AG04449 (cell line): ENCODE measurements at regions of chr13 and their contacts with region 1.

Region 1: DNA sequence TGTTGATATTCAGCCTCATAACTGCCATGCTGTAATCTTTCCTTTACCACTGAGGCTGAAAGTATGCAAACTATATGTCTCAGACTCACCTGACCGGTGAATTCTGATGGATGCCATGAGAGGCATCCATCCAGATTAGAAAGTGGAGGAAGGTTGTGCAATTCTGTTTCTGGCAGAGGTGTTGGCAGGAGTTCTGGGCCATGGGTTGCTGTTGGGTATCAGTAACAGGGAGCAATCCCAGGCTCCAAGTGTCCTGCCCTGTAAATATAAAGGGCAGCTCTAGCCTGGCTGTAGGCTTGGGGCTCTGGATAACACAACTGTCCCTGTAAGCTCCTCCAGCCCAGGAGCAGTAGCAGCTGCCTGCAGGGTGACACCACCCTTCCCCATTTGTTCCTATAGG is 77.4 kb upstream of the ABCC4 start:
- DNase-seq: no peak
- H3K4me3 ChIP-seq: no peak overlapping the region
- CTCF ChIP-seq: no peak

Region 2: GRCh38 chr13:95181586-95181985 is 197.0 kb before region 1 on chr13:
- CTCF ChIA-PET with region 1: interaction called, 1,369 read pairs
- POLR2A ChIA-PET with region 1: no interaction called
- DNase-seq: no peak
- H3K4me3 ChIP-seq: no peak overlapping the region
- CTCF ChIP-seq: no peak

Region 3: DNA sequence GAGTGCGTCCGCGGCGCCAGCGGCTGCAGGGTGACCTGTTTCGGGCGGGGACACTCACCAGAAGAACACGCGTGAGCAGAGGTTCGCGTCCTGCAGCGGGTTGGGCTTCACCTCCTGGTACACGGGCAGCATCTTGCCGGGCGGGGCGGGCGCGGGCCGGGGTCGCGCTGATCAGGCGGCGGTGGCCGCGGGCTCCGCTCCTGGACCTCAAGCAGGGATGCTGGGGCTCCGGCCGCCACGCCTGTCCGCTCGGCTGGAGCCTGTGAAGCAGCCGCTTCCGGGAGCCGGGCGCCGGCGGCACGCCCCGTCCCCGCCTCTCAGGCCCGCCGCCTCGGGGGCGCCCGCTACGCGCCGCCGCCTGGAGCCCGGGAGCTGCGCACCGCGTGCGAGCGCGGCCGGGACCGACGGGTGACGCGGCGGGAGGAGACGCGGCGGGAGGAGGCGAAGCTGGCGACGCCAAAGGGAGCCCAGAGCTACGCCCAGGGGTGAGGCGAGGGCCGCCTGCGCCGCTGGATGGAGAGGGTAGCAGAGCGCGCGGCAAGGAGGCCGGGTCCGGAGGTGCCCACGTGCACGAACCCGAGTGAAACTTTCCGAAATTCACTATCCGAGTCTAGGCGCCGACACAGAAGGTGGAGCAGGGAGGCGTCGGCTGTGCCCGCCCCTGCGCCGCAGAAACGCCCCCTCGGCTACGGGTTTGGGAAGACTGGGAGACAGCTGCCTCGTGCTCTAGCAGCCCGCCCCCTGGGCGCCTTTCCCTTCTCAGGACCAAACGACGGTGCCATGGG is 77.2 kb before region 1 on chr13 and contains the start of gene ABCC4:
- CTCF ChIA-PET with region 1: interaction called, 14 read pairs
- POLR2A ChIA-PET with region 1: no interaction called
- DNase-seq: no peak
- H3K4me3 ChIP-seq: peak within 1 kb of the TSS; percentile 81
- CTCF ChIP-seq: peak; percentile 6

Region 4: DNA sequence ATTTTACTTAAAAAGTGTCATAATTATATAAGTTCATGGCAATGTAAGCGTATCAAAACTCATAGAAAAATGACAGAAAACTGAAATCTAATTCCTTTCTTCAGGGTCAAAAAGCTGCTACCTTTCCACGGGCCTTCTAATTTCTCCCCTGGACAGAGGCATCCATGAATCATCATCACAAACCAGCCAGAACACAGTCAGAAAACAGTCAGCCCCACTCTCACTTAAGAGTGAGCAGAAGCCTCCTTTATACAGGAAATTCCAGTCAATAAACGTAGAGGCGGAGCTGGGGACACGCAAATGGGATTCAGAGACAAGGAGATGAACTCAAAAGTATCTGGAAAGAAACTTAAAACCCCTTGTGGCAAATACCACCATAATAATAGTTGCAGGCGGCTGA is 23.1 kb before region 1 on chr13:
- CTCF ChIA-PET with region 1: interaction called, 18 read pairs
- POLR2A ChIA-PET with region 1: no interaction called
- DNase-seq: peak; percentile 24
- H3K4me3 ChIP-seq: no peak overlapping the region
- CTCF ChIP-seq: no peak

Region 5: GRCh38 chr13:95367309-95367843 is 11.2 kb before region 1 on chr13:
- CTCF ChIA-PET with region 1: interaction called, 13 read pairs
- POLR2A ChIA-PET with region 1: no interaction called
- DNase-seq: no peak
- H3K4me3 ChIP-seq: no peak overlapping the region
- CTCF ChIP-seq: no peak

Region 6: GRCh38 chr13:95656386-95657015 is 277.9 kb after region 1 on chr13:
- CTCF ChIA-PET with region 1: no interaction called
- POLR2A ChIA-PET with region 1: no interaction called
- DNase-seq: no peak
- H3K4me3 ChIP-seq: no peak overlapping the region
- CTCF ChIP-seq: no peak